Naive thymus-derived CD8-positive, alpha-beta T cell (primary cell): ENCODE measurements at regions of chr22 and their contacts with region 1.

Region 1: DNA sequence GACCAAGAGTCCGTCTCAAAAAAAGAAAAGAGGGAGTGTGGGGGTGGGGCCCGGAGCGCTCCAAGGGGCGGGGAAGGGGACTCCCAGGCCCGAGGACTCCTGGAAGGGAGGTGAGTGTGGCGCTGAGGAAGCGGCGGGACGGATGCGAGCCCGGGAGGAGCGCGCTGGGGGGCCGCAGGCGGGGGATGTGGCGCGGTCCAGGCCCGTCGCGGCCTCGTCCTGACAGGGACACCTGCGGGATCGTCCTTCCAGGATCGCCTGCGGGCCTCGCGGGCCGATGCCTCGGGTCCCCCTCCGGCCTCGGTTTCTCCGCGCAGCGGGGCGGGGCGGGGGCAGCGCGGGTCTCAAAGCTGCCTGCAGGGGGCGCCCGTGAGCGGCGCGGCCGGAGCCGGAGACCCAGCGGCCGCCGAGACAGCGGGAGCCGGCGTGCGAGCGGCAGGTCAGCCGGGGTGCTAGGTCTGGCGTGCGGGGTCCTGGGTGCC is 3.8 kb upstream of the ADORA2A start:
- DNase-seq: peak; percentile 30 to 80 (median 64)
- ATAC-seq: peak in 1 of 2 donors; percentile 19
- H3K4me3 Mint-ChIP-seq: peak overlapping the region; percentile 61 to 93 (median 74)
- H3K27ac Mint-ChIP-seq: peak overlapping the region in 4 of 10 donors; percentile 13 to 84 (median 62)
- H3K4me1 Mint-ChIP-seq: peaks cover 30 to 47% (median 39%) of the 10 kb centered on the region in 4 donors
- H3K27me3 Mint-ChIP-seq: no peaks in the 10 kb centered on the region

Region 2: GRCh38 chr22:24410110-24410856 is 13.3 kb before region 1 on chr22:
- POLR2A ChIA-PET with region 1: interaction called, 12 read pairs
- DNase-seq: peak in 4 of 10 donors; percentile 32 to 50 (median 46)
- ATAC-seq: peak; percentile 75 to 84
- H3K4me3 Mint-ChIP-seq: peak overlapping the region in 6 of 10 donors; percentile 23 to 74 (median 52)
- H3K27ac Mint-ChIP-seq: peak overlapping the region; percentile 36 to 91 (median 82)
- H3K4me1 Mint-ChIP-seq: peaks cover 32 to 50% (median 47%) of the 10 kb centered on the region in 4 donors
- H3K27me3 Mint-ChIP-seq: no peaks in the 10 kb centered on the region

Region 3: GRCh38 chr22:24433813-24434470 is 10.4 kb after region 1 on chr22:
- POLR2A ChIA-PET with region 1: interaction called, 48 read pairs
- DNase-seq: peak in 1 of 10 donors; percentile 36
- ATAC-seq: peak; percentile 26 to 31
- H3K4me3 Mint-ChIP-seq: peak overlapping the region; percentile 63 to 93 (median 78)
- H3K27ac Mint-ChIP-seq: peak overlapping the region; percentile 83 to 100 (median 92)
- H3K4me1 Mint-ChIP-seq: peaks cover 40 to 97% (median 92%) of the 10 kb centered on the region in 4 donors
- H3K27me3 Mint-ChIP-seq: no peaks in the 10 kb centered on the region

Region 4: DNA sequence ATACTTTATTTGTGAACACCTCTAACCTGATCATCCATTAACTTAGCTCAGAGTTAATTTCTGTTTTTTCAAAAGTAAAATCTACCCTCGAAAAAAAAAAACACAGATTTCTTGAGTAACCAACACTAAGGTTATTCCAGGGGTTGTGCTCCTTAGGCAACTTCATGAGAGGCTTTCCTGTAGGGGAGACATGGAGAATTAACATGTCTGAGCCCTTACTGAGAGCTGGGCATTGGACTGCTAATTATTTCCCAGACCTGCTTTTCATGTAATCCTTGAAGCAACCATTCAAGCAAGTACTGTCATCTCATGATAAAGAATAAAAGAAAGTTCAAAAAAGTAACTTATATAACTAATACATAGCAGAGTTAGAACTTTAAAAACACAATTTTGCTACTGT is 58.1 kb after region 1 on chr22:
- POLR2A ChIA-PET with region 1: interaction called, 11 read pairs
- DNase-seq: no peak
- ATAC-seq: no peak
- H3K4me3 Mint-ChIP-seq: no peak overlapping the region
- H3K27ac Mint-ChIP-seq: no peak overlapping the region
- H3K4me1 Mint-ChIP-seq: peaks cover 4 to 8% (median 5%) of the 10 kb centered on the region in 4 donors
- H3K27me3 Mint-ChIP-seq: no peaks in the 10 kb centered on the region

Region 5: GRCh38 chr22:24555157-24556039 is 131.8 kb after region 1 on chr22 and contains the start of gene SNRPD3:
- POLR2A ChIA-PET with region 1: interaction called, 20 read pairs
- DNase-seq: peak; percentile 95 to 100 (median 98)
- ATAC-seq: peak; percentile 82 to 85
- H3K4me3 Mint-ChIP-seq: peak within 1 kb of the TSS; percentile 94 to 99 (median 98)
- H3K27ac Mint-ChIP-seq: peak within 1 kb of the TSS; percentile 91 to 99 (median 98)
- H3K4me1 Mint-ChIP-seq: peaks cover 39 to 82% (median 71%) of the 10 kb centered on the region in 4 donors
- H3K27me3 Mint-ChIP-seq: no peaks in the 10 kb centered on the region
- polyA plus RNA-seq, gene SNRPD3: 95.6 to 103 (median 97.9) TPM